ENCODE measurements at regions of chr2 and their contacts with region 1.

Region 1: DNA sequence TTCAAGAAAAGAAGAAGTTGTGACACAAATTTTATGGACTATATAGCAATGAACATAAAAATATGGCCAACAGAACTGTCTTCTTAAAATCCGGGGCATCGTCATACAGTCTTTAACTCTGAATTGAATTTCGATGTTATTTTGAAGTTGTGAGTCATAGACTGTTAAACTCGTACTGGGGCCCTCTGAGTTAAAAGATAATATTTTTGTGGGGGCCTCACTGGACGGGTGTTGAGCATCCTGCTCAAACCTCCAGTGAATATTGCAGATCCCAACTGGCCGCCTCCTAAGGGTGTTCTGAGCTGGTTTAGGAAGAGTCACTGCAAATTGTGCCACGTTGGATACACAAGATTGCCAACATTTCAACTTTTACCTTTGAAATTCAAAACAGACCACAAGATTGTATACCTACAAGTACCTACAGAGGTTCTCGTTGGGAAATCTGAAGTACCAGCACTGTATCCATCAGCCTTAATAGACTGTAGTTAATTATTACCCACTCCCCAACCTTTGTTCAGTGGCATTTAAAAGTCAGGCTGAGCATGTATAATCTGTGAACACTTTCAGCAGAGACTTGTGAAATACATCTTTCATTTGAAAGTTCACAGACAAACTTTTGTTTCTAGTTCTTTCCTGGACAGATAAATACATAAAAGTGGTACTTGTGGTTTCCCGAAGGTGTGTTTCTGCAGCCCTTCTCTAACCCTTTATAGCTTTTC is 27.8 kb downstream of the KLHL23 start:
- DNase-seq: no peak
- ATAC-seq: no peak
- H3K4me3 Mint-ChIP-seq: no peak overlapping the region
- H3K27ac Mint-ChIP-seq: no peak overlapping the region
- H3K4me1 Mint-ChIP-seq: peaks cover 3% of the 10 kb centered on the region
- H3K27me3 Mint-ChIP-seq: no peaks in the 10 kb centered on the region

Region 2: GRCh38 chr2:169336695-169337094 is 424.7 kb before region 1 on chr2:
- CTCF ChIA-PET with region 1: no interaction called
- POLR2A ChIA-PET with region 1: no interaction called
- intact Hi-C with region 1: no loop called
- DNase-seq: no peak
- ATAC-seq: no peak
- H3K4me3 Mint-ChIP-seq: no peak overlapping the region
- H3K27ac Mint-ChIP-seq: no peak overlapping the region
- H3K4me1 Mint-ChIP-seq: no peaks in the 10 kb centered on the region
- H3K27me3 Mint-ChIP-seq: peaks cover 12% of the 10 kb centered on the region

Region 3: GRCh38 chr2:169446452-169446851 is 315.0 kb before region 1 on chr2:
- CTCF ChIA-PET with region 1: no interaction called
- POLR2A ChIA-PET with region 1: no interaction called
- intact Hi-C with region 1: loop called in 1 of 2 experiments (anchors 5 kb)
- DNase-seq: no peak
- ATAC-seq: no peak
- H3K4me3 Mint-ChIP-seq: no peak overlapping the region
- H3K27ac Mint-ChIP-seq: no peak overlapping the region
- H3K4me1 Mint-ChIP-seq: no peaks in the 10 kb centered on the region
- H3K27me3 Mint-ChIP-seq: peaks cover 2% of the 10 kb centered on the region

Region 4: DNA sequence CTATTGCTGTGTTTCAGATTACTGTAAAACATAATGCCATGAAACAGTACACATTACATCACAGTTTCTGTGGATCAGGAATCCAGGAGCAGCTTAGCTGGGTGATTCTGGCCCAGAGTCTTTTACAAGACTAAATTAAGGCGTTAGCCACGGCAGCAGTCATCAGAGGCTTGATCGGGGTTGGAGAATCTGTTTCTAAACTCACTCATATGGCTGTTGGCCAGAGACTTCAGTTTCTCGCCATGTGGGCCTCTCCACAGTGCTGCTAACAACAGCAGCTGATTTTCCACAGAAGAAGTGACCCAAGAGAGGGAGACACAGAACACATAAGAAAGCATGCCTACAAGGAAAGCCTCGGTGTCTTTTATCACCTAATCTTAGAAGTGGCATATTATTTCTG is 327.4 kb after region 1 on chr2:
- CTCF ChIA-PET with region 1: no interaction called
- POLR2A ChIA-PET with region 1: no interaction called
- intact Hi-C with region 1: no loop called
- DNase-seq: no peak
- ATAC-seq: no peak
- H3K4me3 Mint-ChIP-seq: no peak overlapping the region
- H3K27ac Mint-ChIP-seq: no peak overlapping the region
- H3K4me1 Mint-ChIP-seq: no peaks in the 10 kb centered on the region
- H3K27me3 Mint-ChIP-seq: no peaks in the 10 kb centered on the region